Colonic mucosa (tissue), 4 donors: ENCODE measurements at regions of chr10 and their contacts with region 1.

Region 1: DNA sequence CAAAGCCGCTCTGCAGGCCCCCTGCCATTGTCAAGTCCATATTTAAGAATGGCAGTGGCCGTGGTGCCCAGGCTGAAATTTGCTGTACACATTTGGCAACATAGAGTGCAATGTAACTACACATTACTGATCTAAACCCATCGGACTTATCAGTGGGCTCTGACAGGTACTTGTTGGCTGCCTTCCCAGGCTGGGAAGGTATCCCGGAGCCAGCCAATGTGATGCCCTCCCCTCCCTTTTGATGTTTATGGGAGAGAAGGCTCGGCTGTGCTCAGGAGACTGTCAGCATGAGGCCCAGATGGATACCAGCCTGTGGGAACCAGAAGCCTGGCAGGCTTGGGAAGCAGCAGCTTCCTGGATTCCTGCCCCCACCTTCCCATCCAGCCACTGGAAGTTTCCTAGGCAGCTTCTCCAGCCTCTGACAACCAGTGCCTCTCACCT is 146.1 kb upstream of the TCF7L2 start:
- DNase-seq: peak; percentile 71
- H3K4me3 ChIP-seq: no peak overlapping the region
- H3K27ac ChIP-seq: peak overlapping the region; percentile 19
- H3K4me1 ChIP-seq: no peaks in the 10 kb centered on the region
- H3K27me3 ChIP-seq: no peaks in the 10 kb centered on the region
- CTCF ChIP-seq: no peak

Region 2: DNA sequence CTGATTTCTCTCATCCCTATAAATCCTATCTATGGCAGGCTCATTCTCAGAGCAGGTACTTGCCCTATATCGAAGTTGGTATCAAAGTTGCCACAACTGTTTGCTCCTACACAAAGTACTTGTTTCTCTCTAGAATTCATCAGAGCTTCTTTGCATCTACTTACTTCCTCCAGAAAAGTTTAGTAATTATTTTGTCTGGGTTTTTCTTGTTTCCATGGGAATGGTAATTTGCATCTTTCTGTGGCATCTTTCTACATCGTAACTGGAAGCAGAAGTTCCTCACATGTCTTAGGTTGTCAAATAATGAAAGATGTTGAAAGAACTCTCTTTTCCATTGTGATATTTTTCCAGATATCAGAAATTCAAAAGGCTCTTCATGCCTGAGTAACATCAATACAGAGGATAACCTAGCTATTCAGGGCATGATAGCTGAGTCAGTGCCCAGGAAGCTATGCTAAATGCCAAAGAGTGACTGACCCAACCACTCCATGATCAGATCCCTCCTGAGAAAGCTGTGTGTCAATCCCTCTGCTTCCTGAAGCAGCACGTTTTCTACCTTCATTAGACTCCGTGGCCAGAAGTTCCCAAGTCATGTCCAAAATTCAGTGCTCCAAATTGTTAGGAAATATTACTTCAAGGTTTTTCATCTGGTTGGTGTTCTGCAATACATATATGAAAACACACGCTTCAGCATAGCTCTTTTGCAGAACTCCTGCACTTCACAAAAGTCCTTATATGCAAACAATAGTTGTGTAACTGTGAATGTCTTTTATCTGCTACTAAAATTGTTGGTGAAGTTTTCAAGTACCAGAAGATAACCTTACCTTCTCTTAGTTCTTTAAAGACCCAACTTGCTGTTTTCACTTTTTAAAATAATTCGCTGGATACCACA is 140.5 kb before region 1 on chr10:
- intact Hi-C with region 1: no loop called
- DNase-seq: no peak
- H3K4me3 ChIP-seq: no peak overlapping the region
- H3K27ac ChIP-seq: no peak overlapping the region
- H3K4me1 ChIP-seq: no peaks in the 10 kb centered on the region
- H3K27me3 ChIP-seq: no peaks in the 10 kb centered on the region
- CTCF ChIP-seq: no peak

Region 3: GRCh38 chr10:112875476-112876267 is 71.7 kb after region 1 on chr10:
- intact Hi-C with region 1: loop called (anchors 10 kb)
- DNase-seq: peak; percentile 55
- H3K4me3 ChIP-seq: no peak overlapping the region
- H3K27ac ChIP-seq: peak overlapping the region; percentile 35
- H3K4me1 ChIP-seq: no peaks in the 10 kb centered on the region
- H3K27me3 ChIP-seq: no peaks in the 10 kb centered on the region
- CTCF ChIP-seq: no peak

Region 4: GRCh38 chr10:112986544-112987175 is 182.7 kb after region 1 on chr10:
- intact Hi-C with region 1: no loop called
- DNase-seq: no peak
- H3K4me3 ChIP-seq: no peak overlapping the region
- H3K27ac ChIP-seq: no peak overlapping the region
- H3K4me1 ChIP-seq: peaks cover 6% of the 10 kb centered on the region
- H3K27me3 ChIP-seq: no peaks in the 10 kb centered on the region
- CTCF ChIP-seq: no peak